ENCODE measurements at regions of chr4 and their contacts with region 1.

Region 1: DNA sequence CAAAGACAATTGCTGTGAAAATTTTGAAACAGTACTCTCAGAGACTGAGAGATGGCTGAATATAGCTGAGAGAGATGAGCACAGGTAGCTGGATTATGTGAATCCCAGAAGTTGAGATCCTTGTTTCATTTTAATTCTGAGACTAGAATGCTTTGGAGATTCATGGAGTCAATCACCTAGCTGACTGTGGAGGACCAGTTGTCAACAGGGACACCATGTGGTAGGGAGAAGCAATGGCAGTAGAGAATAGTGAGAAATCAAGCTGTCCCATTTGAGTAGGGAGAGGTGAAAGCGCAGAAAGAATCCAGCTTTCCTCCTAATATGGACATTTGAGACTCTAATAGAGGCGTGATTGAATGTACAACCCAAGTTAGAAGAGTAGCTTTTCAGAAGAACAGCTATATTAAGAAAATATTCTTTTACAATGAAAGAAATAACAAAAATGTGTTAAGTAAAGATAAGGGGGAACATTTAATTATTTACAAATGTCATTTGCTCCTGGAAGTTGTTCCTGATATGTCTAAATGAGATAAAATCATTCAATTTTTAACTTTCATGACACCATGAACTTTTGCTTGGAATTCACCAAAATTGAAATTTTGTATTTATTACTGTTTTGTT is 30.3 kb upstream of the GLRB start:
- DNase-seq: peak; percentile 84
- H3K4me3 Mint-ChIP-seq: no peak overlapping the region
- H3K27ac Mint-ChIP-seq: peak overlapping the region; percentile 55
- H3K4me1 Mint-ChIP-seq: peaks cover 22% of the 10 kb centered on the region
- H3K27me3 Mint-ChIP-seq: no peaks in the 10 kb centered on the region
- CTCF ChIP-seq: peak; percentile 89

Region 2: GRCh38 chr4:156169011-156169410 is 876.6 kb before region 1 on chr4:
- CTCF ChIA-PET with region 1: interaction called, 4 read pairs
- POLR2A ChIA-PET with region 1: no interaction called
- intact Hi-C with region 1: loop called (anchors 1 kb)
- DNase-seq: peak; percentile 76
- H3K4me3 Mint-ChIP-seq: no peak overlapping the region
- H3K27ac Mint-ChIP-seq: peak overlapping the region; percentile 56
- H3K4me1 Mint-ChIP-seq: peaks cover 17% of the 10 kb centered on the region
- H3K27me3 Mint-ChIP-seq: no peaks in the 10 kb centered on the region
- CTCF ChIP-seq: peak; percentile 43

Region 3: GRCh38 chr4:156677131-156677531 is 368.5 kb before region 1 on chr4:
- CTCF ChIA-PET with region 1: interaction called, 5 read pairs
- POLR2A ChIA-PET with region 1: no interaction called
- intact Hi-C with region 1: loop called (anchors 1 kb)
- DNase-seq: peak; percentile 61
- H3K4me3 Mint-ChIP-seq: no peak overlapping the region
- H3K27ac Mint-ChIP-seq: peak overlapping the region; percentile 21
- H3K4me1 Mint-ChIP-seq: no peaks in the 10 kb centered on the region
- H3K27me3 Mint-ChIP-seq: no peaks in the 10 kb centered on the region
- CTCF ChIP-seq: peak; percentile 25

Region 4: DNA sequence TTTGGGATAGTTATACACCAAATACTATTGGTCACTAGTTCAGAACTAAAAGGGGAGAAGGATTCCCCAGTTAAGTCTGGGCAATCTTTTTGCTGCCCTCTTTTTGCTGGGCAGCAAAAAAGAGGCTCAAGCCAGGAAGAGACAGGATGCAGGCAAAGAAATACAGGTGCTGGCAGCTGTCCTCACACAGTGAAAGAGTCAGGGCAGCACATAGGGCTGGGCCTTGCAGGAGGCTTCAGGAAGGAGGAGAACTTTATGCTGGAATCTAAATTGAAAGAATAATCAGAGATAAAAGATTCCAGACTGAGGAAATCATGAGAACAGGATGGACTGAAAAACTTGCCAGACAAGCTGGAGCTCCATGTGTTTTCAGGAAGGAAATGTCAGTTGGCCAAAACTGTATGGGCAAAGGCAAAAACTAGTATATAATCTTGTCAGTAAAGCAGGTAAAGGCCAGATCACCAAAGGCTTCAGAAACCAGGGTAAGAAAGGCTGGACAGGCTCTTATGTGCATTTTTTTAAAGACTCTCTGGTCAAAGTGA is 120.8 kb before region 1 on chr4:
- CTCF ChIA-PET with region 1: no interaction called
- POLR2A ChIA-PET with region 1: no interaction called
- intact Hi-C with region 1: no loop called
- DNase-seq: no peak
- H3K4me3 Mint-ChIP-seq: no peak overlapping the region
- H3K27ac Mint-ChIP-seq: peak overlapping the region; percentile 61
- H3K4me1 Mint-ChIP-seq: peaks cover 53% of the 10 kb centered on the region
- H3K27me3 Mint-ChIP-seq: no peaks in the 10 kb centered on the region
- CTCF ChIP-seq: no peak

Region 5: DNA sequence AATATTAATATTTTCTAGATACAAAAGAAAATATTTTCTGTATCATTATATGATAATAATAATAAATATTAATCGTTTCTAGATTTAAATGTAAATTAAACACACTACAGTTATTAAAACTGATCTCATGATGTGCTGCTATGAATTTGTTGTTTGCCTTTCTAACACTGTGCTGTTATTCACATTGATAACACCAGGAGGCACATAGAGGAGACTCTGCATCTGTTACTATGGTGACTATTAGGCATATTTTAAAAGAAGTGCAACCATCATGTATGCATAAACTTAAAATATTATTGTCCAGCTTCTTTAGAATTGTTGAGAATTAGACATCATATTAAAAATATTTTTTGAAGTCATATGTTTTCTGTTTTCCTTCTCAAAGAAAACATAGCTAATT is 62.3 kb before region 1 on chr4:
- CTCF ChIA-PET with region 1: interaction called, 41 read pairs
- POLR2A ChIA-PET with region 1: no interaction called
- intact Hi-C with region 1: loop called (anchors 1 kb)
- DNase-seq: peak; percentile 48
- H3K4me3 Mint-ChIP-seq: no peak overlapping the region
- H3K27ac Mint-ChIP-seq: no peak overlapping the region
- H3K4me1 Mint-ChIP-seq: no peaks in the 10 kb centered on the region
- H3K27me3 Mint-ChIP-seq: no peaks in the 10 kb centered on the region
- CTCF ChIP-seq: peak; percentile 43

Region 6: DNA sequence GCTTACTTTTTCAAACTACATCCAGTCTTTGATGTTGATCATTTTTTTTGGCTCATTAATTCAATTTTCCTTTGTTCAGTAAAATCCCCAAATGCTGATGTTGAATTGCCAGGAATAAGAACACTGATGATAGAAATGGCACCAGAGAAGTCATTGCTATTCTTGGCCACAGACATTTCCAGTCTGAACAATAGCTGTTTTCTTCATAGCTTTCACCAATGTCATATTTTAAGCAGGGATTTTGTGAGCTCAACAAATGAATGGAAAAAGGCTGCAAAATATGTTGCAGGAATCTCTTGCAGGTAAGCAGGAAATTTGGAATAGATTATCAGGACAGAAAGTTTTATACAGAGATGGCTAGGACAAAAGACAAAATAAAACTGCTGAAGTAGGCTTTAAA is 10.1 kb before region 1 on chr4:
- CTCF ChIA-PET with region 1: interaction called, 17 read pairs
- POLR2A ChIA-PET with region 1: no interaction called
- intact Hi-C with region 1: no loop called
- DNase-seq: no peak
- H3K4me3 Mint-ChIP-seq: no peak overlapping the region
- H3K27ac Mint-ChIP-seq: no peak overlapping the region
- H3K4me1 Mint-ChIP-seq: no peaks in the 10 kb centered on the region
- H3K27me3 Mint-ChIP-seq: no peaks in the 10 kb centered on the region
- CTCF ChIP-seq: no peak

Region 7: DNA sequence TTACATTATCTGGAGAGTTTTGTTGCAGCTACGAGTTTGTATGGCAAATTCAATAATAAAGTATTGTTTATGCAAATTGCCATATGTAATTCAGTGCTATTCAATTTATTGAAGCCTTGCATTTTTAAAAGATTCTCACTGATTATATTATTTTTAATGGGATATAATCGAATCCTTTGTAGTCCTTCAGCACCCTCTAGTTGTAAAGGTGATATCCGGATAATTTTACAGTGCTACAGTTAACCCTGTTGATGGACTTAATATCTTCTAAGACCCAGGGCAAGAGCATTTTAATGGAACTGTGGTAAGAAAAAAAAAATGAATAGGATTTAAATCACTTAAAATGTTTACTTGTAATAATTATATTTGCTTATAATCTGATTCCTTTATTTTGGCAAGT is 126.4 kb after region 1 on chr4:
- CTCF ChIA-PET with region 1: no interaction called
- POLR2A ChIA-PET with region 1: no interaction called
- intact Hi-C with region 1: loop called (anchors 5 kb)
- DNase-seq: peak; percentile 26
- H3K4me3 Mint-ChIP-seq: no peak overlapping the region
- H3K27ac Mint-ChIP-seq: no peak overlapping the region
- H3K4me1 Mint-ChIP-seq: no peaks in the 10 kb centered on the region
- H3K27me3 Mint-ChIP-seq: no peaks in the 10 kb centered on the region
- CTCF ChIP-seq: peak; percentile 25